Ascending aorta (tissue), 2 donors: ENCODE measurements at regions of chr1 and their contacts with region 1.

Region 1: GRCh38 chr1:23867953-23868556 is at the start of gene FUCA1:
- DNase-seq: peak; percentile 81 to 97
- H3K4me3 ChIP-seq: peak within 1 kb of the TSS; percentile 81 to 88
- H3K27ac ChIP-seq: peak within 1 kb of the TSS; percentile 67 to 82
- H3K4me1 ChIP-seq: peaks cover 0 to 15% of the 10 kb centered on the region in 2 donors
- H3K27me3 ChIP-seq: no peaks in the 10 kb centered on the region
- CTCF ChIP-seq: peak; percentile 94 to 98 (median 96)
- total RNA-seq, gene FUCA1: 11.1 TPM

Region 2: GRCh38 chr1:23772049-23772853 is 95.8 kb before region 1 on chr1:
- intact Hi-C with region 1: loop called (anchors 2 kb)
- DNase-seq: peak; percentile 43 to 92
- H3K4me3 ChIP-seq: peak overlapping the region in 1 of 2 donors; percentile 23
- H3K27ac ChIP-seq: no peak overlapping the region
- H3K4me1 ChIP-seq: peaks cover under 1 to 2% of the 10 kb centered on the region in 2 donors
- H3K27me3 ChIP-seq: no peaks in the 10 kb centered on the region
- CTCF ChIP-seq: peak; percentile 80 to 97 (median 95)

Region 3: DNA sequence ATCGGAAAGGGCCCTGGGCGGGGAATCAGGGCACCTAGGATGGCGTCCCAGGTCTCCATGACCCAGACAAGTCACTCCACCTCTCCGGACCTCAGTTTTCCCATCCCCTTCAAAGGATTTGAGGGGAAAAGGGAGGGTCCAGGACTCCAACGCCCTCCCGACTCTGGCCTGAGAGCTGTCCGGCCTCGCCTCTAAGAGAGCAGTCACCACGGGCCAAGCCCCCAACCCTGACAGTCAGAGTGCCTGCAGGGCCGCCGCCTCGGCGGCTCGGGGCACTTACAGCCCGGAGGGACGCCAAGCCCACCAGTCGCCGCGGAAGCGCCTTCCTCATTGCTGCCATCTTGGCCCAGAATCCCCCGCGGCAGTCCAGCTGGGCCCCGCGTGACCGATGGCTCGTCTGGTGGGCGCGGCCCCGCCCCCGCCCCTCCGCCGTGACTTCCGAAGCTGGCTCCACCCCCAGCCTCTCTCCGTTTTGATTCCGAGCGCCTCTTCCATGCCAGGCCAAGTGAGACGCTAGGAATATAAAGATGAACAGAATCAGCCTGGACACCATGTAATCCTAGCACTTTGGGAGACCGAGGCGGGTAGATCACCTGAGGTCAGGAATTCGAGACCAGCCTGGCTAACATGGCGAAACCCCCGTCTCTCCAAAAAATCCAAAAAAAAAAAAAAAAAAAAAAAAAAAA is 42.8 kb before region 1 on chr1 and contains the start of gene HMGCL:
- intact Hi-C with region 1: loop called (anchors 2 kb)
- DNase-seq: peak; percentile 58 to 95
- H3K4me3 ChIP-seq: peak within 1 kb of the TSS; percentile 77 to 97
- H3K27ac ChIP-seq: peak within 1 kb of the TSS; percentile 97
- H3K4me1 ChIP-seq: peaks cover 0 to 6% of the 10 kb centered on the region in 2 donors
- H3K27me3 ChIP-seq: no peaks in the 10 kb centered on the region
- CTCF ChIP-seq: no peak
- total RNA-seq, gene HMGCL: 7.3 TPM

Region 4: GRCh38 chr1:23930861-23931490 is 62.9 kb after region 1 on chr1:
- intact Hi-C with region 1: loop called (anchors 2 kb)
- DNase-seq: peak in 1 of 2 donors; percentile 75
- H3K4me3 ChIP-seq: peak overlapping the region in 1 of 2 donors; percentile 48
- H3K27ac ChIP-seq: peak overlapping the region; percentile 78 to 89
- H3K4me1 ChIP-seq: peaks cover 0 to 10% of the 10 kb centered on the region in 2 donors
- H3K27me3 ChIP-seq: no peaks in the 10 kb centered on the region
- CTCF ChIP-seq: no peak

Region 5: GRCh38 chr1:24018611-24019580 is 150.8 kb after region 1 on chr1:
- intact Hi-C with region 1: loop called (anchors 5 kb)
- DNase-seq: peak; percentile 83 to 99
- H3K4me3 ChIP-seq: peak overlapping the region in 1 of 2 donors; percentile 34
- H3K27ac ChIP-seq: peak overlapping the region; percentile 89 to 91
- H3K4me1 ChIP-seq: peaks cover 30 to 80% of the 10 kb centered on the region in 2 donors
- H3K27me3 ChIP-seq: no peaks in the 10 kb centered on the region
- CTCF ChIP-seq: no peak